ENCODE measurements at regions of chr7 and their contacts with region 1.

Region 1: DNA sequence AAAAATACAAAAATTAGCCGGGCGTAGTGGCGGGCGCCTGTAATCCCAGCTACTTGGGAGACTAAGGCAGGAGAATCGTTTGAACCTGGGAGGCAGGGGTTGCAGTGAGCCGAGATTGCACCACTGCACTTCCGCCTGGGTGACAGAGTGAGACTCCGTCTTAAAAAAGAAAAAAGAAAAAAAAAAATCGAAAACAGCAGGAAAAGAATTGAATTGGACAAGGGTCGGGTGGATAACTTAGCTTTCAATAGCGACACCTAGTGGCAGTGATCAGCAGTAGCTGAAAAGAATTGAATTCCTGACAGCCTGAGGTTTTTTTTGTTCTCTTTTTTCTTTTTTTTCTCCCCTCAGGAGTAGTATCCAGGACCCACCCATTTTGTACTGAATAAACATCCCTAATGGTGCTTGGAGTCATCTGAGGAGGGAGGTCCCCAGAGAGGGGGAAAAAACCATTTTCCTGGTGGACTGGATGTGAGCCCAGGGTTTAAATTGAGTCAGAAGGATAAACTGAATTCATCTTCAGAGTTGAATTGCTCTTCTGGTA is 55.1 kb downstream of the CYCS start:
- DNase-seq: peak in 2 of 4 donors; percentile 72 to 81
- ATAC-seq: peak; percentile 89
- H3K4me3 ChIP-seq: no peak overlapping the region
- H3K27ac ChIP-seq: no peak overlapping the region
- H3K4me1 ChIP-seq: peaks cover 0 to 4% of the 10 kb centered on the region in 2 donors
- H3K27me3 ChIP-seq: no peaks in the 10 kb centered on the region
- CTCF ChIP-seq: peak; percentile 83 to 92

Region 2: GRCh38 chr7:24819916-24820689 is 249.9 kb before region 1 on chr7:
- intact Hi-C with region 1: loop called in 1 of 2 experiments (anchors 5 kb)
- DNase-seq: peak; percentile 80 to 92 (median 88)
- ATAC-seq: peak; percentile 94
- H3K4me3 ChIP-seq: no peak overlapping the region
- H3K27ac ChIP-seq: peak overlapping the region; percentile 9 to 53
- H3K4me1 ChIP-seq: peaks cover 7 to 22% of the 10 kb centered on the region in 2 donors
- H3K27me3 ChIP-seq: no peaks in the 10 kb centered on the region
- CTCF ChIP-seq: peak; percentile 69 to 72

Region 3: GRCh38 chr7:24851786-24852185 is 218.2 kb before region 1 on chr7:
- intact Hi-C with region 1: no loop called
- DNase-seq: no peak
- ATAC-seq: no peak
- H3K4me3 ChIP-seq: no peak overlapping the region
- H3K27ac ChIP-seq: no peak overlapping the region
- H3K4me1 ChIP-seq: no peaks in the 10 kb centered on the region
- H3K27me3 ChIP-seq: no peaks in the 10 kb centered on the region
- CTCF ChIP-seq: no peak